ENCODE measurements at regions of chr4 and their contacts with region 1.

Region 1: DNA sequence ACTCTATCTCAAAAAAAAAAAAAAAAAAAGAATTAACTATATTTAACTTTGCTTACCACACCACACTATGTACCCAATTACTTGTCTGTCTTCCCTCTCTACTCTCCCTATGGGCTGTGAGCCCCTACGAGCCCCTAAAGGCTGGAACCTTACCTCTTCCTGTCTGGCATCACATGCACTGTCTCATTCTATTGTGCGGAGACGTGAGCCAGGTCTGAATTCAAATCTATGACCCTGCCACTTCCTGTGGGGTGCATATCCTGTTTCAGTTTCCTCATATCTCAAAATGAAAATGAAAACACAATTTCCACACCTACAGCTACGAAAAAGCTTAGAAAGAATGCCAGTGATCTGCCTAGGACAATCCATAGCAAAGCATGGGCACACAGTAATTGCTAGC is 42.9 kb upstream of the HS3ST1 start:
- DNase-seq: peak; percentile 69
- H3K4me3 Mint-ChIP-seq: peak overlapping the region; percentile 14
- H3K27ac Mint-ChIP-seq: peak overlapping the region; percentile 31
- H3K4me1 Mint-ChIP-seq: peaks cover 33% of the 10 kb centered on the region
- H3K27me3 Mint-ChIP-seq: peaks cover 4% of the 10 kb centered on the region

Region 2: DNA sequence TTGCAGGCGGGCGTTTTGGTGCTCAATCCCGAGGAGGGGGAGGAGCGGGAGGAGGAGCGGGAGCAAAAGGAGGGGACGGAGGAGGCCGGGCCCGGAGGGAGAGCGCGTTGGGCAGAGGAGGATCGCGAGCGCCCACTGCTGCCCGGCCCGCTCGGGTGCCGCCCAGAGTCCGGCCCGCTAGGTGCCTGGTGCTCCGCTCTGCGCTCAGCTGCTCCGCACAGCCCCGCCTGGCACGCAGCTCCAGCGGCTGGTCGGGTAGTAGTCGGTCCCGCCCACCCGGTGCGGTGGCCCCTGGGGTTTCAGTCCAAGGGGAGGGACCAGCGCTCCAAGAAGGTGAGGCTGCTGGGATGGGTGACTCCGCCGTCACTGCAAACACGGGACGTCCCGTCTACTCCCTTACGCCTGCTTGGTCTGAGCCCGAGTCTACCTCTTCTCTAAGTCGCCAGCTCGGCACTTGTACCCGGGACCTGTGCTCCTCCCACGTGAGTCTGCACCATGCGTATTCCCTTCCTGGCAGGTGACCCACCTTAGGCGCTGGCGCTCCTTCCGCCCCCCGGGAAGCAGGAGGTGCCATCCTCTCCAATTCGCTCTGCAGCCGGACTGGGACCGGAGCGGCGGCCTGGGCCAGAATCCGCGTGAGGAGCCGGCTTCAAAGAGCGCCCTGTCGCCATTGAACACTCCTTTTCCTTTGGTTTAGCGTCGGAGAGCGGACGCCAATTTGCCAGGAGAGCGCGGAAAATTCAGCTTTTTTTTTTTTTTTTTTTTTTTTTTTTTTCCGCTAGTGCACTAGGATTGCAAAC is 42.5 kb before region 1 on chr4:
- CTCF ChIA-PET with region 1: no interaction called
- POLR2A ChIA-PET with region 1: no interaction called
- intact Hi-C with region 1: loop called (anchors 5 kb)
- DNase-seq: peak; percentile 58
- H3K4me3 Mint-ChIP-seq: peak overlapping the region; percentile 54
- H3K27ac Mint-ChIP-seq: no peak overlapping the region
- H3K4me1 Mint-ChIP-seq: peaks cover 12% of the 10 kb centered on the region
- H3K27me3 Mint-ChIP-seq: peaks cover 51% of the 10 kb centered on the region

Region 3: GRCh38 chr4:11440481-11441193 is 31.0 kb before region 1 on chr4:
- CTCF ChIA-PET with region 1: no interaction called
- POLR2A ChIA-PET with region 1: no interaction called
- intact Hi-C with region 1: loop called (anchors 1 kb)
- DNase-seq: no peak
- H3K4me3 Mint-ChIP-seq: no peak overlapping the region
- H3K27ac Mint-ChIP-seq: no peak overlapping the region
- H3K4me1 Mint-ChIP-seq: peaks cover 8% of the 10 kb centered on the region
- H3K27me3 Mint-ChIP-seq: no peaks in the 10 kb centered on the region

Region 4: DNA sequence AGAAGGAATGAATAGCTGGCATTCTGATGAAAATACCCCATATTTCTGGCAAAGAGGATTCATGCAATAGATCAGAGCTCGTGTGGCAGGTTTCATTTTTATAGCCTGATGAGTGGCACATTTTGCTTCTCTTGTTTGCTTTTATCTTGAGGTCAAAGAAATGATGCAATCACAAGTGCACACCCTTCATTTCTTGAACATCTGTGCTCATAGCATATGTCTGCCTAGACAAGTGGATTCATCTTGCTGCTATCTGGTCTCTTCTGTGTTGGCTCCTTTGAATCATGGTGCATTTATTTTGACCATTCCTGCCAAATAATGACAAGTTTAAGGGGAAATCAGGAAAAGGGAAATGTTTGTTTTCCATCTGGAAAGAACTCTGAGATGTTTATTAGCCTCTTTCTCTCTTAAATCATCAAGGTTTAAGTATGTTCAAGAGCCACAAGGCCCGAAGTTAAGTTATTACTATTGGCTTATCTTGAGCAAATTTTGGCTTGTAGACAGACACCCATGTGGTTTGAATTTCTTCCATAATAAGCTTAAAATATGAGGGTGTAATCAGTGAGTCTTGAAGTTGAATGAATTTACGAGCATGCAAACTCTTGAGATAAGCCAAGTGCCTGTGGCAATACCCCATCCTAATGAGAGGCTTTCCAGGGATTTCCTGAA is 16.4 kb after region 1 on chr4:
- CTCF ChIA-PET with region 1: no interaction called
- POLR2A ChIA-PET with region 1: no interaction called
- intact Hi-C with region 1: loop called (anchors 1 kb)
- DNase-seq: no peak
- H3K4me3 Mint-ChIP-seq: no peak overlapping the region
- H3K27ac Mint-ChIP-seq: no peak overlapping the region
- H3K4me1 Mint-ChIP-seq: peaks cover 24% of the 10 kb centered on the region
- H3K27me3 Mint-ChIP-seq: no peaks in the 10 kb centered on the region

Region 5: DNA sequence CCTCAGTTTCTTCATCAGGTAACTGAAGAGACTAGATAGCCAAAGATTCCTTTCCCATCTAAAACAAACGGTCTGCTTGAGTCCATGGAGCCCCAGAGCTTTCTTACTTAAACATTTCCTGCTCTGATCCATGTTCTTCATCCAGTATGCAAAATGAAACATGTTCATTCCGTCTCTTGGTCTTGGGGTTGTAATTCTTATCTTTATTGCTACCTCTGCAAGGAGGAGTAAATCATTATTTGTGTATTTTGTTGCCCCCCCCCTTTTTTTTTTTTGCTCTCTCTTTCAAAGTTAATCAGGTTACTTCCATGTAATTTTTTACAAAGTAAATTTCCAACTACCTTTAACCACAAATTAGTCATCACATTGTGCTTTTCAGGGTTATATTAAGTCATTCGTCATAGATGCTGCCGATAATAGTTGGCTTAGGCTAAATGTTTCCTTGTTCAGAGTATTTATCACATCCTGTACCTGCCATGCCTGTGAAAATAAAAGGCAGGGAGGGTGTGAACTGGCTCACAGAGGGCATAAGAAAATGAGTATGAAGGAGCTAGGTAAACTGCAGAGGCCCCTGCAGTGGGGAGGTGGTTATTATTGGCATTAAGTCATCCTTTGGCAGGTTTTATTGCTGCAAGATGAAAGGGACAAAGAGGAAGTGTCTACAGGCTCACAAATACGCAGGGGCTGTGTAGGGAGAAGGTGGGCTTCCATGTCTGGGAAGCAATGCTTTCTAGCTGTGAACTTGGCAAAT is 33.8 kb after region 1 on chr4:
- CTCF ChIA-PET with region 1: no interaction called
- POLR2A ChIA-PET with region 1: no interaction called
- intact Hi-C with region 1: loop called (anchors 1 kb)
- DNase-seq: peak; percentile 51
- H3K4me3 Mint-ChIP-seq: no peak overlapping the region
- H3K27ac Mint-ChIP-seq: peak overlapping the region; percentile 50
- H3K4me1 Mint-ChIP-seq: peaks cover 20% of the 10 kb centered on the region
- H3K27me3 Mint-ChIP-seq: no peaks in the 10 kb centered on the region

Region 6: GRCh38 chr4:11635359-11636072 is 163.9 kb after region 1 on chr4:
- CTCF ChIA-PET with region 1: no interaction called
- POLR2A ChIA-PET with region 1: no interaction called
- intact Hi-C with region 1: no loop called
- DNase-seq: no peak
- H3K4me3 Mint-ChIP-seq: no peak overlapping the region
- H3K27ac Mint-ChIP-seq: no peak overlapping the region
- H3K4me1 Mint-ChIP-seq: no peaks in the 10 kb centered on the region
- H3K27me3 Mint-ChIP-seq: no peaks in the 10 kb centered on the region

Measured in activated CD4-positive, alpha-beta memory T cell treated with anti-CD3 and anti-CD28 coated beads for 36 hours (primary cell).